OCI-LY7 (cell line): ENCODE measurements at regions of chr13 and their contacts with region 1.

Region 1: GRCh38 chr13:78632996-78633395 is 26.0 kb downstream of the OBI1 start:
- DNase-seq: no peak
- H3K4me3 ChIP-seq: no peak overlapping the region
- H3K27ac ChIP-seq: no peak overlapping the region
- H3K4me1 ChIP-seq: peaks cover 27% of the 10 kb centered on the region
- CTCF ChIP-seq: no peak

Region 2: DNA sequence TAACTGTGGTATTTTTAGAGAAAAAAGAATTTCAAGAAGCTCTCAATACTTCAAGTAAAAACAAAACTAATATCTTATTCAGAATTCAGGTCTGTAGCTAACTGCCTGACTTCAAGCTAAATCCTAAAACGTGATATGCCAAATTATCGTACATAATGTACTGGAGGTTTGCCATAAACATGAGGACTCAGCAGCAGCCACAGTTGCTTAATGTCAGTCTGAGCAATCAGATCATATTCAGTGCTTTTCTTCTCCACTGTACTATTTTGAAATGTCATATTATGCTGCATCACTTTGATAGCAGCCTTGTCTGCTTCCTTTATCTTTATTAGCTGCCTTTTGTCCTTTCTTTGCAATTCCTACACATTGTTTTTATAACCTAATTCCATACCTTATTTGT is 449.3 kb before region 1 on chr13:
- CTCF ChIA-PET with region 1: no interaction called
- POLR2A ChIA-PET with region 1: no interaction called
- intact Hi-C with region 1: no loop called
- DNase-seq: no peak
- H3K4me3 ChIP-seq: no peak overlapping the region
- H3K27ac ChIP-seq: no peak overlapping the region
- H3K4me1 ChIP-seq: no peaks in the 10 kb centered on the region
- CTCF ChIP-seq: no peak

Region 3: DNA sequence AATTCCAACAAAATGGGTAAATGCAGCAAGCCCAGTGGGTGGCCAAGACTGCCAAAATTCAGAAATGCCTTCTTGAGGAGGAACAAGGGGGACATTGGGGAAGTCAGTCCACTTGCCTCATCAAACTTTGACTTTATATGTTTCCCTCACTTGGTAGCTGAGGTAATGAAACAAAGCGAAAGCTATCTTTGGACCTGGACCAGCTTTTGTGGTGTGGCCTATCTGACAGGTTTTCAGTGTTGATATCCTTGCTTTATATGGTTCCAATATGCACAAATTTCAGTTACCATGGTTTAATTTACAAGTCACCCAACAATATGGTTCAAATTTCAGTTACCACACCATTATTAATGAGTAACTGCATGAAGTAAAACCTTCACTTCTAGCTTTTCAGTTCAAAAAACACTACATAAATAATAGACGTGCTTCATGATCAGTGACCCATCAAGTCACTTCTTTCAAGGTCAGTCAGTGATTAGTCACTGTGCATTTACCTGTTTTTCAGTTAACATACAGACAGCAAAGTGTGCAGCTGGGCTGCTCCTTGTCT is 12.0 kb before region 1 on chr13:
- CTCF ChIA-PET with region 1: interaction called, 3 read pairs
- POLR2A ChIA-PET with region 1: interaction called, 18 read pairs
- intact Hi-C with region 1: no loop called
- DNase-seq: no peak
- H3K4me3 ChIP-seq: no peak overlapping the region
- H3K27ac ChIP-seq: no peak overlapping the region
- H3K4me1 ChIP-seq: no peaks in the 10 kb centered on the region
- CTCF ChIP-seq: no peak